ENCODE measurements at regions of chr17 and their contacts with region 1.

Region 1: GRCh38 chr17:7915611-7916382 is at the start of gene RNF227:
- DNase-seq: peak; percentile 62 to 94
- ATAC-seq: peak; percentile 77 to 80
- H3K4me3 ChIP-seq: peak within 1 kb of the TSS; percentile 48
- H3K27ac ChIP-seq: peak within 1 kb of the TSS; percentile 82 to 92
- H3K4me1 ChIP-seq: peaks cover 13% of the 10 kb centered on the region
- CTCF ChIP-seq: no peak
- EP300 ChIP-seq: no peak
- POLR2A ChIP-seq: peak; percentile 86
- RAD21 ChIP-seq: no peak
- polyA plus RNA-seq, gene RNF227: 2.1 and 2.4 TPM in 2 replicates

Region 2: GRCh38 chr17:7862692-7863437 is 52.9 kb before region 1 on chr17:
- CTCF ChIA-PET with region 1: interaction called, 77 read pairs
- POLR2A ChIA-PET with region 1: no interaction called
- DNase-seq: peak; percentile 65 to 66
- ATAC-seq: no peak
- H3K4me3 ChIP-seq: no peak overlapping the region
- H3K27ac ChIP-seq: no peak overlapping the region
- H3K4me1 ChIP-seq: peaks cover 15% of the 10 kb centered on the region
- CTCF ChIP-seq: peak; percentile 96
- EP300 ChIP-seq: no peak
- POLR2A ChIP-seq: no peak
- RAD21 ChIP-seq: peak; percentile 94 to 97

Region 3: DNA sequence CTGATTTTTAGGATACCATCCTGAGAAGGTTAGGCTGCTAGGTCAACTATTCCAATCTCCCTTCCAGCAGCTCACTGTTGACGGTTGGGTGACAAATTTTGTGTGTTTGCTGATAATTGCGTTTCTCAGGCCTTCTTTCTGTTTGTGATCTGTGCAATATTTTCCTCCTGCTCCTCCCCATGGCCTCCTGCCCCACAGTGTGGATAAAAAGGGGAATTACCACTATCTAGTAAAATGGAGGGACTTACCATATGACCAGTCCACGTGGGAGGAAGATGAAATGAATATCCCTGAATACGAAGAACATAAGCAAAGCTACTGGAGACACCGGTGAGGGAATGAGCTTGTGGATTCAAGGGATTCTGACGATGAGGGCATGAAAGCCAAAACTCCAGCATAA is 18.0 kb before region 1 on chr17:
- CTCF ChIA-PET with region 1: interaction called, 119 read pairs
- POLR2A ChIA-PET with region 1: interaction called, 3 read pairs
- DNase-seq: peak; percentile 55 to 72
- ATAC-seq: peak; percentile 87 to 92
- H3K4me3 ChIP-seq: no peak overlapping the region
- H3K27ac ChIP-seq: no peak overlapping the region
- H3K4me1 ChIP-seq: no peaks in the 10 kb centered on the region
- CTCF ChIP-seq: peak; percentile 64
- EP300 ChIP-seq: no peak
- POLR2A ChIP-seq: no peak
- RAD21 ChIP-seq: peak; percentile 81 to 88

Region 4: DNA sequence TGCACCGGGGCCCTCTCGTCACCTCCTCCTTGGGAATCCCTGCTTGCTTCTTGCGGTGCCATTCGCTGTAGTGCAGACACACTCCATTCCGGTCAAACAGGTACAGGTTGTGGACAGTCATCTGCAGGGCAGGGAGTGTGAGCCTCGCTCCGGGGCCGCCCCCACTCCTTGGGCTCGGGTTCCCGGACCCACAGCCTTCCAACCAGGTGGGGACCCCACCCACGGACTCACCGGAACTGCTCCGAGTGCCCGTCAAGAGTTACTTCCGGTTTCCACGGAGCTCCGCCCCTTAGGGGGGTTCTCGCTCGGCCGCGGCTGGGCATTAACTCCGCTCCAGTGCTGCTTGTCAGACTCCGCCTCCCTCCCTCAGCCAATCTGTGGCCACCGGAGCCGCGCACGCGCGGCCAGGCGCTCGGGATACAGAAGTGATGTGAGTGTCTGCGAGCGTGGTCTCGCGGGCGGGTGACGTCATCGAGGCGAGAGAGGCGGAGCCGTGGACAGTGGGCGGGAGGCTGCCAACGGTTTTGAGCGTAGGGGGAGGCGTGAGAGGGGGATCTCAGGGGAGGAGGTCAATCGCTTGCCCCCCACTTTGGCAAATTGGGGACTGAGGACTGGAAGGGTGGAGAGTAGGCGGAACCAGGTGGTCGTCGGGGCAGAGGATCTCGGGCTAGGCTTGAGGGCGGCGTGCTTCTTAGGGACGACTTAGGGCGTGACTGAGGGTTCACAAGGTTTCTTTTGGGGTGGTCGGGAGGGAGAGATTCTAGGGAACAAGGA is 16.1 kb after region 1 on chr17 and contains the starts of genes CNTROB and TRAPPC1:
- CTCF ChIA-PET with region 1: interaction called, 128 read pairs
- POLR2A ChIA-PET with region 1: interaction called, 20 read pairs
- DNase-seq: peak; percentile 99 to 100
- ATAC-seq: peak; percentile 86 to 94
- H3K4me3 ChIP-seq: peak within 1 kb of the TSS; percentile 69
- H3K27ac ChIP-seq: peak within 1 kb of the TSS; percentile 86 to 89
- H3K4me1 ChIP-seq: peaks cover 21% of the 10 kb centered on the region
- CTCF ChIP-seq: no peak
- EP300 ChIP-seq: no peak
- POLR2A ChIP-seq: peak; percentile 72
- RAD21 ChIP-seq: no peak
- polyA plus RNA-seq, gene CNTROB: 23.2 and 28.3 TPM in 2 replicates
- polyA plus RNA-seq, gene TRAPPC1: 200 and 204 TPM in 2 replicates

Region 5: DNA sequence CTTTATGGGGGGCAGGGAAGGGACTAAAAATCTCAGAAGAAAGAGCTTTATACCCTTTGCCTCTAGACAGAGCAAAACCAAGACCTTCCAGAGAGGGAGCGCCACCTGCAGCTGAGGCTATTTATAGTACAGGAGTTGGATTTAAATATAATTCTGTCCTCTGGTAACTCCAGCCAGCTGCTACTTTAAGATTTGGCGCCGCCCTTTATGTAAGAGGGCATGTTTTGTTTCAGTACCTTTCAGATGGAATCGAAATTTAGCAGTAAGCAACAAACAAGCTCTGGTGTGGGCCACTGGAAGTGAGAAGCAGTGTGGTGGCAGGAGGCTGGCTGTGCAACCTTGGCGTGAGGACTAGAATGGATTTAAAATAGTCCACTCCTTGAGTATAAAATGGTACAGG is 81.4 kb after region 1 on chr17:
- CTCF ChIA-PET with region 1: interaction called, 372 read pairs
- POLR2A ChIA-PET with region 1: no interaction called
- DNase-seq: peak; percentile 67 to 68
- ATAC-seq: peak; percentile 94 to 95
- H3K4me3 ChIP-seq: no peak overlapping the region
- H3K27ac ChIP-seq: no peak overlapping the region
- H3K4me1 ChIP-seq: no peaks in the 10 kb centered on the region
- CTCF ChIP-seq: peak; percentile 70
- EP300 ChIP-seq: no peak
- POLR2A ChIP-seq: no peak
- RAD21 ChIP-seq: peak; percentile 40 to 44; a peak in 3 of 5 replicates

Region 6: GRCh38 chr17:8005960-8006730 is 90.3 kb after region 1 on chr17:
- CTCF ChIA-PET with region 1: interaction called, 15 read pairs
- POLR2A ChIA-PET with region 1: no interaction called
- DNase-seq: peak in 1 of 2 experiments; percentile 64
- ATAC-seq: peak in 1 of 2 experiments; percentile 74; a peak in 3 of 6 replicates
- H3K4me3 ChIP-seq: no peak overlapping the region
- H3K27ac ChIP-seq: no peak overlapping the region
- H3K4me1 ChIP-seq: no peaks in the 10 kb centered on the region
- CTCF ChIP-seq: no peak
- EP300 ChIP-seq: no peak
- POLR2A ChIP-seq: no peak
- RAD21 ChIP-seq: no peak

Region 7: DNA sequence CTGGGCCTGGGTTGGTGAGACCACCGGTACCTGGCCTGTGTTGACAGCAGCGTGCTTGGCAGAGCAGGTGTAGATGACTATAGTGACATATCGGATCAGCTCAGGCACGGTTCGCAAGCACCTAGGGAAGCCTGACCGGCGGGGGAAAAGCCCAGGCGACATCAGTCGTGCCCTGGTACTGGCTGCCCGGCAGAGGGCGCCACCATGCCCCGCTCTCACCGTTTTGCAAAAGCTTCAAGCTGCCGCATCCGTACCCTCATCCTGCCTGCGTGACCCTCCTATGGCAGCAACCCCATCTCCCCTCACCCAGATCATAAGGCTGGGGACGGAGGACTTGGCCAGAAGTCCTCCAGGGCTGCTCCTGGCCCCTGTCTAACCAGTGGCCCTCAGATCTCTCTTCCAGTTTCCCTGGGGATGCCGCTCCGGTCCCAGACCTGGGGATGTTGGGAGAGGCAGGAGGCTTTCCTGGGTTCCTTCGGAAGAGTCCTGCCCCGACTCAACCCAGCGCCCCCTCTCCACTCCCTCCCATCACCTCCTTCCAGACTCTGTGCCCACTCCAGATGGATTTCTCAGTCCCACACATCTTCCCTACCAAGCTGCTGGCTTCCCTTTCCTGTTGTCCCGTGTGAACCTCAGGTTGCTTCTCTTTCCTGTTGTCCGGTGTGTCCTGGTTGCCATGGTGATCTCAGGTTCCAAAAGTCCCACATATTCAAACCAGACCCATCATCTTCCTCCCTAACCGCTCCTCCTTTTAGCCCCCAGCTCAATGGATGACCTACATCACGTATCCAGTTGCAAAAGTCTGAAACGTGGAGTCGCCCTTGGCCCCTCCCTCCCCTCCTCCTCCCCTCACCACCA is 158.1 kb after region 1 on chr17:
- CTCF ChIA-PET with region 1: interaction called, 10 read pairs
- POLR2A ChIA-PET with region 1: no interaction called
- DNase-seq: peak; percentile 84 to 91
- ATAC-seq: peak; percentile 75 to 92
- H3K4me3 ChIP-seq: peak overlapping the region; percentile 34
- H3K27ac ChIP-seq: peak overlapping the region in 1 of 2 experiments; percentile 27; a peak in 2 of 6 replicates
- H3K4me1 ChIP-seq: peaks cover 15% of the 10 kb centered on the region
- CTCF ChIP-seq: peak; percentile 97
- EP300 ChIP-seq: no peak
- POLR2A ChIP-seq: no peak
- RAD21 ChIP-seq: peak; percentile 35 to 42; a peak in 2 of 5 replicates